ENCODE measurements at regions of chr17 and their contacts with region 1.

Region 1: GRCh38 chr17:29148790-29149430 is 31.3 kb downstream of the MYO18A start:
- DNase-seq: peak; percentile 90
- ATAC-seq: peak; percentile 98
- H3K4me3 ChIP-seq: peak overlapping the region; percentile 54
- H3K27ac ChIP-seq: peak overlapping the region; percentile 53
- H3K4me1 ChIP-seq: peaks cover 17% of the 10 kb centered on the region
- H3K27me3 ChIP-seq: no peaks in the 10 kb centered on the region
- CTCF ChIP-seq: peak; percentile 99
- POLR2A ChIP-seq: peak; percentile 59; the same call in 1 of the 2 replicates
- RAD21 ChIP-seq: peak; percentile 94

Region 2: DNA sequence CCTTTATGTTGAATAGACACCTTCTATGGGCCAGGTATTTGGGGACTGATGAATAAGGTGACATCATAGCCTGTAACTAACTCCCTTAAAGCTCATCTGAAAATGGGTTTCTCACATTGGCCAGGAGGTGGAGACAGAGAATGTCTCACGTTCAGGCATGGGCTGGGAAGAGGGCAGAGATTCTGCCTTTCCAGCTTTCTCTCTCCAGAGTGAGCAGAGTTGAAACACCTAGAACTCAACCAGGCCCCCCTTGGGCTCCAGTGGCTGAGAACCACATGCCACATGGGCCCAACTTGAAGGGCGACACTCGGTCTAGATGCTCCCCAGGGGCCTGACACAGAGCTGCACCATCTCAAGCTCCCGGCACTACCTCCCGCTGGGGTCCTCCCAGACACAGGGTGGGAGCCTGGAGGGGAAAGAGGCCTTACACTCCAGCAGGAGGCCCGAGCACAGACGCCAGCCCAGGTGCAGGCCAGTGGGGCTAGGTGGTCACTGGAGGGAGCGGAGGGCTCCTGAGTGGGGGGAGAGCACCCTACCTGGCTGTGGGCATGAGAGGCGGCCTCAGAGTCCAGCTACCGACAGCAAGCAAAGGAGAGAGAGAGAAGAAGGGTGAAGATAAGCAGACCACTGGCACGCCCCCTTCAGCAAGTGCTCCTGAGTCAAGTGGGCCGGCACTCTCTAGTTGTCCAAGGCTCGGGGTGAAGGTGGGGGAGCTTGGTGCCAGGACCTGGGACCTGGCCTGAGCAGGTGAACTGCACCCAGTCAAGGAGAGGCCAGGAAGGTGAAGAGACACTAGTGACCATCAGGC is 24.6 kb before region 1 on chr17:
- CTCF ChIA-PET with region 1: interaction called, 40 read pairs
- POLR2A ChIA-PET with region 1: no interaction called
- dilution Hi-C with region 1: no loop called
- in situ Hi-C with region 1: no loop called
- intact Hi-C with region 1: loop called (anchors 1 kb)
- DNase-seq: peak; percentile 82
- ATAC-seq: peak; percentile 98
- H3K4me3 ChIP-seq: no peak overlapping the region
- H3K27ac ChIP-seq: no peak overlapping the region
- H3K4me1 ChIP-seq: no peaks in the 10 kb centered on the region
- H3K27me3 ChIP-seq: no peaks in the 10 kb centered on the region
- CTCF ChIP-seq: peak; percentile 95
- POLR2A ChIP-seq: no peak
- RAD21 ChIP-seq: peak; percentile 95

Region 3: DNA sequence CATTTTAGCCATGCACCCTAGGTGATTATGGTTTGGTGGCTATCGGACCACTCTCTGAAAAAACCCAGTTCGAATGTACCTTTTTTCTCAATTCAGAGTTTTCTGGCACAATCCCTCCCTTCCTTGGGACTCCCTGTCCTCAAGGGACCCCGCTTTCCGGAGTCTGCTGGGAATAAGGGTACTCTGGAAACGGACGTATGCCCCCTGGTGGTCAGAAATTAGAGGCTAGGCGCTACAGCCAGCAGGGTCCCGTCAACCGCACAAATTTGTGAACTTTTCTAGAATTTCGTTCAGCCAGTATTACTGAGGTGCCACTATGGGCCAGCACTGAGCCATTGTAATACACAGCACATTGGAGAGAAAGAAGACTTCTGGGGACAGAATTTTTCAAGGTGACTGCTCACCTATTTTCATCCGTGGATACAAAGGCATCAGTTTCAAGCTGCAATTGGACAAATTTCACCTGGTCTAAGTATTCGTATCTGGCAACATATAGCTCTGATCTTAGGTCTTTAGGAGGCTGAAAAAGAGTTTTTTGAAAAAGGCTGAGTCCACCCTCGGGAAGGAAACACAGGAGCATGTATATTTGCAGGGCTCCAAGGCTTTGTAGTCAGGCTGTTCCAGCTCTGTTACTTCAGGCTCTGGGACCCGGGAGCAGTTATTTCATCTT is 70.6 kb after region 1 on chr17:
- CTCF ChIA-PET with region 1: interaction called, 56 read pairs
- POLR2A ChIA-PET with region 1: no interaction called
- dilution Hi-C with region 1: no loop called
- in situ Hi-C with region 1: loop called (anchors 5 kb)
- intact Hi-C with region 1: loop called (anchors 1 kb)
- DNase-seq: peak; percentile 83
- ATAC-seq: peak; percentile 98
- H3K4me3 ChIP-seq: no peak overlapping the region
- H3K27ac ChIP-seq: no peak overlapping the region
- H3K4me1 ChIP-seq: no peaks in the 10 kb centered on the region; the same call in 1 of the 2 replicates
- H3K27me3 ChIP-seq: no peaks in the 10 kb centered on the region
- CTCF ChIP-seq: peak; percentile 98
- POLR2A ChIP-seq: no peak
- RAD21 ChIP-seq: peak; percentile 76

Region 4: GRCh38 chr17:29293890-29294579 is 145.1 kb after region 1 on chr17 and contains the start of gene NUFIP2:
- CTCF ChIA-PET with region 1: interaction called, 11 read pairs
- POLR2A ChIA-PET with region 1: interaction called, 4 read pairs
- dilution Hi-C with region 1: no loop called
- in situ Hi-C with region 1: loop called (anchors 5 kb)
- intact Hi-C with region 1: loop called (anchors 1 kb)
- DNase-seq: peak; percentile 98
- ATAC-seq: peak; percentile 90
- H3K4me3 ChIP-seq: peak within 1 kb of the TSS; percentile 70
- H3K27ac ChIP-seq: peak within 1 kb of the TSS; percentile 93
- H3K4me1 ChIP-seq: no peaks in the 10 kb centered on the region
- H3K27me3 ChIP-seq: no peaks in the 10 kb centered on the region
- CTCF ChIP-seq: no peak
- POLR2A ChIP-seq: peak; percentile 100
- RAD21 ChIP-seq: no peak
- total RNA-seq, gene NUFIP2: 25.6 and 38.9 TPM in 2 replicates

Region 5: DNA sequence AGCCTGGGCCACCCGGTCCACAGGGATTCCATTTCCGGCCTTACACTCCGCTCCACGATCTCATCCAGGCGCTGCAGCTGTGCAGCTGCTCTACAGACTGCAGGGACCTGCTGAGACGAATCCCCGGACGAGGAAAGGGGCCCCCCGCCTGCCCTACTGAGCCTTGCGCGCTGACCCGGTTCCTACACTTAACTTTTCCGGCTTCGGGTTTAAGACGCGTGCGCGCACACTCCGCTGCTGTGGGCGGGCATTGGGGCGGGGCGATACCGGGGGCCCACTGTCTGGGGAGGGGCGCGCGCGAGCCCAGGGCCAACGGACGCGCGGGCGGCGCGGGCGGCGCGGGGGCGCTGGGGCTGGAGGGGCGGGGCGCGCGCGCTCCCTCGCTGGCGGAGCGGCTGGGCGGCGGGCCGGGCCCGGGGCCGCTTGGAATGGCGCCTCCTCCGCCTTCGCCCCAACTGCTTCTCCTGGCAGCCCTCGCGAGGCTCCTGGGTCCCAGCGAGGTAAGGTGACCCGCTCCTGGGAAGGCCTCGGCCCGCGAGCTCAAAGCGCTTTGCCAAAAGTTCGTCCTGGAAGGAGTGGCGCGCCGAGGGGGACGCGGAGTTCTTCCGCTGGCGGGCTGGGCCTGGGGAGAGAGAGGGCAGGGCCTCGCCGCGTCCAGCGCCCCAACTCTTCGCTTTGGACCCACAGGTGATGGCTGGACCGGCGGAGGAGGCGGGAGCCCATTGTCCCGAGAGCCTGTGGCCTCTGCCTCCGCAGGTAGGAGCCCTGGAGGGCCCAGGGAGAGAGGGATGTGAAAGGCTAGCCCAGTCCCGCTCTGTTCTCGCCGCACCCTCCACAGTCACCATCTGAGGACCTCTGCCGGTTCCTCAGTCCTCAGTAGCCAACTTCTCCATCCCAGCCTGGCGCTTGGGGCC is 419.7 kb after region 1 on chr17 and contains the start of gene TP53I13:
- CTCF ChIA-PET with region 1: no interaction called
- POLR2A ChIA-PET with region 1: no interaction called
- dilution Hi-C with region 1: no loop called
- in situ Hi-C with region 1: no loop called
- intact Hi-C with region 1: loop called (anchors 10 kb)
- DNase-seq: peak; percentile 68
- ATAC-seq: peak; percentile 71
- H3K4me3 ChIP-seq: peak within 1 kb of the TSS; percentile 97
- H3K27ac ChIP-seq: peak within 1 kb of the TSS; percentile 88
- H3K4me1 ChIP-seq: peaks cover 11% of the 10 kb centered on the region
- H3K27me3 ChIP-seq: no peaks in the 10 kb centered on the region
- CTCF ChIP-seq: no peak
- POLR2A ChIP-seq: 0 out of 2 replicates have a peak, but pooled peaks have one; percentile 30
- RAD21 ChIP-seq: no peak
- total RNA-seq, gene TP53I13: 18.3 and 22.0 TPM in 2 replicates

Measured in IMR-90 (cell line).